Right cardiac atrium (tissue), 5 donors: ENCODE measurements at regions of chr14 and their contacts with region 1.

Region 1: GRCh38 chr14:75411214-75411540 is 16.6 kb upstream of the JDP2 start:
- DNase-seq: peak in 1 of 3 donors; percentile 56
- ATAC-seq: peak; percentile 66 to 75
- H3K4me3 ChIP-seq: no peak overlapping the region
- H3K27ac ChIP-seq: peak overlapping the region; percentile 25
- H3K4me1 ChIP-seq: no peaks in the 10 kb centered on the region
- H3K27me3 ChIP-seq: no peaks in the 10 kb centered on the region

Region 2: GRCh38 chr14:75454963-75455945 is 44.1 kb after region 1 on chr14:
- intact Hi-C with region 1: loop called in 2 of 4 experiments (anchors 5 to 10 kb)
- DNase-seq: peak; percentile 76 to 88 (median 85)
- ATAC-seq: peak; percentile 3 to 4
- H3K4me3 ChIP-seq: no peak overlapping the region
- H3K27ac ChIP-seq: peak overlapping the region; percentile 53
- H3K4me1 ChIP-seq: peaks cover 49% of the 10 kb centered on the region
- H3K27me3 ChIP-seq: no peaks in the 10 kb centered on the region

Region 3: GRCh38 chr14:76131071-76131965 is 720.1 kb after region 1 on chr14:
- intact Hi-C with region 1: no loop called
- DNase-seq: no peak
- ATAC-seq: no peak
- H3K4me3 ChIP-seq: no peak overlapping the region
- H3K27ac ChIP-seq: no peak overlapping the region
- H3K4me1 ChIP-seq: no peaks in the 10 kb centered on the region
- H3K27me3 ChIP-seq: no peaks in the 10 kb centered on the region